MCF 10A (cell line): ENCODE measurements at regions of chr12 and their contacts with region 1.

Region 1: GRCh38 chr12:102364709-102365108 is 115.7 kb downstream of the IGF1 start:
- DNase-seq: no peak
- H3K4me3 Mint-ChIP-seq: no peak overlapping the region
- H3K27ac Mint-ChIP-seq: no peak overlapping the region
- H3K4me1 Mint-ChIP-seq: no peaks in the 10 kb centered on the region
- H3K27me3 Mint-ChIP-seq: no peaks in the 10 kb centered on the region
- CTCF ChIP-seq: no peak

Region 2: GRCh38 chr12:102388469-102388868 is 23.8 kb after region 1 on chr12:
- CTCF ChIA-PET with region 1: interaction called, 3 read pairs
- POLR2A ChIA-PET with region 1: interaction called, 4 read pairs
- intact Hi-C with region 1: loop called (anchors 1 kb)
- DNase-seq: no peak
- H3K4me3 Mint-ChIP-seq: no peak overlapping the region
- H3K27ac Mint-ChIP-seq: no peak overlapping the region
- H3K4me1 Mint-ChIP-seq: no peaks in the 10 kb centered on the region
- H3K27me3 Mint-ChIP-seq: no peaks in the 10 kb centered on the region
- CTCF ChIP-seq: no peak